ENCODE measurements at regions of chr17 and their contacts with region 1.

Region 1: DNA sequence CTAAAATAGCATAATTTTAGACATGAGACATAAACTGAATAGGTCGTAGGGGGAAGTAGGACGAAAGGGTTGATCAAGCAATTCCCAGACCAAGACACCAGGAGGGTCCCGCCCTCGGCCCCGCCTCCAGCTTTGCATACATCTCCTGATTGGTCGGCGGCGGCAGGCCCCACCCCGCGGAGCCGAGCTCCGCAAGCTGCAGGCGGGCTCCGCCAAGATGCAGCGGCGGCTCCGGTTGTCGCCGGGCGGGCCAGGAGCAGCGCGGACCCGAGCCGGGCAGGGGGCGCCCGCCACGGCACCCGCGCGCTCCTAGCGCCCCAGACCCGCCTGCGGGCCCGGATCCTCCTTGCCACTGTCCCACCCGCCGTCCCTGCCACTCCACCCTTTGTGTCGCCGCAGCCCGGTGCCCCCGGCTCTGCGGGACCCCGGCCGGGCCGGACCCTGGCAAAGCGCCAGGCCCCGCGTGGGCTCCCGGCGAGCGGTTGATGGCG is at the start of gene CDR2L:
- DNase-seq: peak; percentile 98 to 99 (median 99)
- H3K4me3 ChIP-seq: peak within 1 kb of the TSS; percentile 19 to 97 (median 83)
- H3K27ac ChIP-seq: peak within 1 kb of the TSS; percentile 29 to 98 (median 90)
- H3K27me3 ChIP-seq: no peaks in the 10 kb centered on the region
- CTCF ChIP-seq: peak in 16 of 56 donors; percentile 1 to 48 (median 14)
- total RNA-seq, gene CDR2L: 11.9 to 63.9 (median 22.6) TPM

Region 2: GRCh38 chr17:74852237-74853047 is 135.0 kb before region 1 on chr17:
- intact Hi-C with region 1: no loop called
- DNase-seq: no peak
- H3K4me3 ChIP-seq: peak overlapping the region in 4 of 59 donors; percentile 2 to 26 (median 12)
- H3K27ac ChIP-seq: peak overlapping the region in 1 of 59 donors; percentile 91
- H3K27me3 ChIP-seq: peaks cover 0 to 58% (median 34%) of the 10 kb centered on the region in 45 donors
- CTCF ChIP-seq: no peak

Region 3: GRCh38 chr17:75034236-75034908 is 46.9 kb after region 1 on chr17:
- intact Hi-C with region 1: loop called in 1 of 2 experiments (anchors 2 kb)
- DNase-seq: peak; percentile 78 to 94 (median 87)
- H3K4me3 ChIP-seq: peak overlapping the region; percentile 44 to 97 (median 80)
- H3K27ac ChIP-seq: peak overlapping the region; percentile 60 to 99 (median 97)
- H3K27me3 ChIP-seq: no peaks in the 10 kb centered on the region
- CTCF ChIP-seq: peak in 1 of 56 donors; percentile 11